A549 (cell line): ENCODE measurements at regions of chr7 and their contacts with region 1.

Region 1: DNA sequence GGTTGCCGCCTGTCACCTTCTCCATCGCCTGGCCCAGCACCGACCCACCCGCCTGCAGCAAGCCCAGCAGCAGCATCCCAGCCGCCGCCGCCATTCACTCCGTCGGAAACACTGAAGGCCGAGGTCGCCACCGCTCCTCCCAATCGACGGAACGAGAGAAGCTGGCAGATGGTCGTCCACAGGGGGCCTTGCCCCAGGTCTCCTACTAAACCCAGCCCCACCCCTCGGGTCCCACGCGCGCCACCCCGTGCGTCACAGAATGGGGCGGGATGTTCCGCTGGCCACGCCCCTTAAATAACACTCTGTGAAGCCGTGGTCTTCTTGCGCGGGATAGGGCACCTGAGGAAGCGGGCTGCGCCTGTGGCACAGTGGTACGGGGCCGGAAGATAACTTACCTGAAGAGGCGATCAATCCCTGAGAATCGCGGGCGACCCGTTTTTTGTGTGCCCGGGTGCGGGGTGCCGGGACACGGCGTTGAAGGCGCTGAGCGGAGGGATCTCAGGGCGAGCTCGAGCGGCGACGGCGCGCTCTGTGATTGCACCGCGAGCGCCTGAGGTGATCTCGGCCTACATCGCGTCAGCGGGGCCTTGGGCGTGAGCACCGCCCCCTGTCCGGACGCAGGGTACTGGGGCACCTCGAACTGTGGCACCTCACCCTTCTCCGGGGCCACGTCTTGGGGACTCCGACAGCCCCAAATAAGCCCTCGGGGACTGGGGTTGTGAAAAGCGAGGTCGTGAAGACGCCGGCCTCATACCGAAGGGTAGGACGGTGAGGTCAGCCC is at the start of gene CYP51A1:
- DNase-seq: peak; percentile 89 to 95
- ATAC-seq: peak; percentile 93 to 94
- H3K4me3 ChIP-seq: peak within 1 kb of the TSS; percentile 92
- H3K27ac ChIP-seq: peak within 1 kb of the TSS; percentile 96 to 98
- H3K4me1 ChIP-seq: peaks cover 13% of the 10 kb centered on the region; the same call in 2 of the 3 replicates
- CTCF ChIP-seq: no peak
- EP300 ChIP-seq: no peak
- POLR2A ChIP-seq: peak; percentile 74
- RAD21 ChIP-seq: no peak
- polyA plus RNA-seq, gene CYP51A1: 12.6 and 18.1 TPM in 2 replicates

Region 2: DNA sequence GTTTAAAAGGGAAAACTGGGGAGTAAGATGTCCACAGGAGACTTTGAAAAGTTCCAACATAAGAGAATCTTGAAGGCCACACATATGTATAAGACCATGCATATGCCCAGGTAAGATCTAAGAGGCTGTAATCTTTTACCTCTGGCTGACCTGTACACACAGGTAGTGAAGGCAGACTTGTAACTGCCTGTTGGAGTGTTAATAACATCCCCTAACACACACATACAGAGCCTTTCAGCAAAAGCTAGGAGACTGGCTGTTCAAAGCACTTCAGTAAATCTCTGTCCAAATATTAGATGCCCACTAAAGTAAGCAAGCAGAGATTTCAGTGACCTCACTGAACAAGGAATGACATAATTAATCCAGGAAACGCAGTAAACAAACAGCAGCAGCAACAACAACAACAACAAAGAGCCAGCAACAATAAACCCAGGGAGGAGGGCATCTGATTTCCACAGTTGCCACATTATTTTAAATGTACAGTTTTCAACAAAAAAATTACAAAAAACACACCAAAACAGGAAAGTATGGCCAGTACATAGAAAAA is 15.2 kb before region 1 on chr7:
- CTCF ChIA-PET with region 1: interaction called, 21 read pairs
- POLR2A ChIA-PET with region 1: no interaction called
- DNase-seq: no peak
- ATAC-seq: no peak
- H3K4me3 ChIP-seq: no peak overlapping the region
- H3K27ac ChIP-seq: no peak overlapping the region
- H3K4me1 ChIP-seq: no peaks in the 10 kb centered on the region
- CTCF ChIP-seq: no peak
- EP300 ChIP-seq: no peak
- POLR2A ChIP-seq: no peak
- RAD21 ChIP-seq: no peak